Psoas muscle (tissue), 8 donors: ENCODE measurements at regions of chr18 and their contacts with region 1.

Region 1: GRCh38 chr18:24354286-24354685 is 43.3 kb downstream of the OSBPL1A start:
- DNase-seq: no peak
- ATAC-seq: no peak
- H3K4me3 ChIP-seq: no peak overlapping the region
- H3K27ac ChIP-seq: no peak overlapping the region
- H3K4me1 ChIP-seq: no peaks in the 10 kb centered on the region
- H3K27me3 ChIP-seq: no peaks in the 10 kb centered on the region
- CTCF ChIP-seq: no peak

Region 2: GRCh38 chr18:24296276-24296675 is 58.0 kb before region 1 on chr18:
- intact Hi-C with region 1: no loop called
- DNase-seq: no peak
- ATAC-seq: no peak
- H3K4me3 ChIP-seq: no peak overlapping the region
- H3K27ac ChIP-seq: no peak overlapping the region
- H3K4me1 ChIP-seq: no peaks in the 10 kb centered on the region
- H3K27me3 ChIP-seq: no peaks in the 10 kb centered on the region
- CTCF ChIP-seq: no peak

Region 3: GRCh38 chr18:24726727-24727492 is 372.6 kb after region 1 on chr18:
- intact Hi-C with region 1: loop called in 1 of 2 experiments (anchors 10 kb)
- DNase-seq: peak; percentile 59 to 74
- ATAC-seq: peak; percentile 42 to 84 (median 54)
- H3K4me3 ChIP-seq: peak overlapping the region; percentile 60
- H3K27ac ChIP-seq: no peak overlapping the region
- H3K4me1 ChIP-seq: peaks cover 13% of the 10 kb centered on the region
- H3K27me3 ChIP-seq: peaks cover 0 to 12% (median 0%) of the 10 kb centered on the region in 3 donors
- CTCF ChIP-seq: peak; percentile 79